ENCODE measurements at regions of chr7 and their contacts with region 1.

Region 1: GRCh38 chr7:90309882-90310281 is 11.2 kb downstream of the FAM237B start:
- DNase-seq: no peak
- H3K4me3 ChIP-seq: no peak overlapping the region
- H3K27ac ChIP-seq: no peak overlapping the region
- H3K4me1 ChIP-seq: no peaks in the 10 kb centered on the region
- H3K27me3 ChIP-seq: no peaks in the 10 kb centered on the region
- CTCF ChIP-seq: no peak

Region 2: DNA sequence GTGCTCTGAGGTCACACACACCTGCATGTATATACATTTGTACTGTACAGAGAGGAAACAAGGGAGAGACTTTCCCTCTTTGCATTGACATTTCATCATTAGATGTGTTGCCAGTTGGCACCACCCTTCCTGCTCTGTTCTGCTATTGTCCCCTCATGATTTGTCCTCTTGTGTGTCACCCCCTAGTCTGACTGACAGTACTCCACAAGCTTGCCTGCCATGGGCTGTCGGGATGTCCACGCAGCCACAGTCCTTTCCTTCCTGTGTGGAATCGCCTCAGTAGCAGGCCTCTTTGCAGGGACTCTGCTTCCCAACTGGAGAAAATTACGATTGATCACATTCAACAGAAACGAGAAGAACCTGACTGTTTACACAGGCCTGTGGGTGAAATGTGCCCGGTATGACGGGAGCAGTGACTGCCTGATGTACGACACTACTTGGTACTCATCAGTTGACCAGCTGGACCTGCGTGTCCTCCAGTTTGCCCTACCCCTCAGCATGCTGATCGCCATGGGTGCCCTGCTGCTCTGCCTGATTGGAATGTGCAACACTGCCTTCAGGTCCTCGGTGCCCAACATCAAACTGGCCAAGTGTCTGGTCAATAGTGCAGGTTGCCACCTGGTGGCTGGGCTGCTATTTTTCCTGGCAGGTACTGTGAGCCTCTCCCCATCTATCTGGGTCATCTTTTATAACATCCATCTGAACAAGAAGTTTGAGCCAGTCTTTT is 102.7 kb after region 1 on chr7:
- CTCF ChIA-PET with region 1: interaction called, 3 read pairs
- POLR2A ChIA-PET with region 1: interaction called, 13 read pairs
- intact Hi-C with region 1: no loop called
- DNase-seq: peak in 1 of 2 experiments; percentile 12
- H3K4me3 ChIP-seq: no peak overlapping the region
- H3K27ac ChIP-seq: no peak overlapping the region
- H3K4me1 ChIP-seq: peaks cover 15% of the 10 kb centered on the region
- H3K27me3 ChIP-seq: no peaks in the 10 kb centered on the region
- CTCF ChIP-seq: peak; percentile 50; the same call in 1 of the 2 replicates

Measured in PC-9 (cell line).